Left ventricle myocardium inferior (tissue), 1 donor: ENCODE measurements at regions of chr1 and their contacts with region 1.

Region 1: DNA sequence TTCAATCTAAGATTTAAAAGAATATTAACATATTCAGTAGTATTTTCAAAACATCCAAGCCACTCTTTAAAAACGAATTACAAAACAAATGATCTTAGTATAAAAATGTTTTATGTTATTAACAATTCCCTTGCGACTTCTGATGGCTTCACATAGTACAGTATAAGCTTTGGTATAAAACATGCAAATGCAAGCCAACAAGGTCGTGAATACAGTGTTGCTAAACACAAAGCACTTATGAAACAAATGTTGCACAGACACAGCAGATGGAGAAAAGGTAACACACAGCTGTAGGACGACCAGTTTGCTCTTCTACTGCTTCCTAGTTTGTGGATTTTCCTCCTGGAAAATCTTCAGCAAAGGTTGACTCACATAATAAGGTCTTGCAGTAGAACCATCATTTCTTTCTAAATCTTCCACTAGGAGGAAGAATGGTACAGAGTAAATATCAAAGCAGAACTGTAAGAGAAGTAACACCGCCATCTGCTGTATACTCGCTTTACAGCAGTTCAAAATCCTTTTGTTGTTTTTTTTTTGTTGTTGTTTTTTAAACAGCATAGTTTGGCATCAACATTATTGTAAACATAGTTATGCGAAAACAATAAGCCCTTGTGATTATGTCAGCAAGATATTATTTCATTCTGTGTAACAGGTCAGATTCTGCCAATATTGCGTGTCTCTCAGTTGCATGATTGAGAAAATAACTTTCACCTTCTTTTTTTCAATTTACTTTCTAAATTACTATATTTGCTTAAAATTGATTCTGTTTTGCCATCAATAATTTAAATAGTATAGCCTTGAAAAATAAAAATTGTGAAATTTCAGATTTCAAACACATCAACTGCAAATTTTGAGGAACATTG is 69.5 kb downstream of the LHX8 start:
- DNase-seq: no peak
- H3K4me3 ChIP-seq: no peak overlapping the region
- H3K27ac ChIP-seq: no peak overlapping the region
- H3K4me1 ChIP-seq: no peaks in the 10 kb centered on the region
- H3K27me3 ChIP-seq: peaks cover 34% of the 10 kb centered on the region
- CTCF ChIP-seq: peak; percentile 75

Region 2: GRCh38 chr1:74771913-74772515 is 431.6 kb before region 1 on chr1:
- intact Hi-C with region 1: loop called (anchors 2 kb)
- DNase-seq: no peak
- H3K4me3 ChIP-seq: no peak overlapping the region
- H3K27ac ChIP-seq: no peak overlapping the region
- H3K4me1 ChIP-seq: no peaks in the 10 kb centered on the region
- H3K27me3 ChIP-seq: peaks cover 34% of the 10 kb centered on the region
- CTCF ChIP-seq: peak; percentile 81